ENCODE measurements at regions of chr2 and their contacts with region 1.

Region 1: GRCh38 chr2:27380626-27381545 is at the start of gene ZNF513:
- DNase-seq: peak; percentile 99
- total RNA-seq, gene ZNF513: 10.6 TPM

Region 2: DNA sequence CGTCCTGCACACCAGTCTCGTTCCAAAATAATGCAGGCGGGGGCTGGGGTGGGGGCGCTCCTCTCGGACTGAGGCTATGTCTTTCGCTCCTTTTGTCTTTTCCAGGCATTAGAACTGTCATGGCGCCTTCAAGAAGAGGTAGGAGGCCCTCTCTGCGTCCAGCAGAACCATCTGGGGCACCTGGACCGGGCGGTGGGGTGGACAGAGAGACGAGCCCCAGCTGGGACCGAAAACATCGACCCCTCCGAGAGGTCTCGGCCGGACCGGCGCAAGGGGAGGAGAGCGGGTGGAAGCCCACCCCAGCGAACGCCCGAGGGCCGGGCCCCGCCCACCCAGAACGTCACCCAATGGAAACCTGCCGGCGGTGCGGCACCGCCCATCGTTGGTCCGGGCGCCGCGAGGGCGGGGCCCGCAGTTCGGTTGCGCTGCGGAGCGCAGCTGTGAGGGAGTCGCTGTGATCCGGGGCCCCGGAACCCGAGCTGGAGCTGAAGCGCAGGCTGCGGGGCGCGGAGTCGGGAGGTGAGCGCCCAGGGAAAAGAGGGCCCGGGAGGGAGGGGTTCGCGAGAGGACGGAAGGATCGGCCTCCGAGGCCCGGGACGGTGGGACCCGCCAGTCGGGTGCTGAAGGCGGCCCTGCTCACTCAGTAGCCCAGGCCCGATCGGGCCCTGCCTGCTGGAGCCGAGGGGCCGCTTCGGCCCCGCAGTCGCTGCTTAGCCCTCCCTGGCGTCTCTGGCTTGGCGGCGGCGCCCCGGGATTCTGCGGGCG is 47.5 kb after region 1 on chr2 and contains the start of gene NRBP1:
- intact Hi-C with region 1: loop called (anchors 2 kb)
- DNase-seq: peak; percentile 96
- total RNA-seq, gene NRBP1: 64.6 TPM